PC-3 (cell line): ENCODE measurements at regions of chr7 and their contacts with region 1.

Region 1: GRCh38 chr7:133539016-133539415 is 286.1 kb downstream of the EXOC4 start:
- DNase-seq: no peak
- ATAC-seq: no peak
- H3K4me3 ChIP-seq: no peak overlapping the region
- H3K27ac ChIP-seq: no peak overlapping the region
- H3K4me1 ChIP-seq: peaks cover 9% of the 10 kb centered on the region
- H3K27me3 ChIP-seq: no peaks in the 10 kb centered on the region
- CTCF ChIP-seq: no peak

Region 2: DNA sequence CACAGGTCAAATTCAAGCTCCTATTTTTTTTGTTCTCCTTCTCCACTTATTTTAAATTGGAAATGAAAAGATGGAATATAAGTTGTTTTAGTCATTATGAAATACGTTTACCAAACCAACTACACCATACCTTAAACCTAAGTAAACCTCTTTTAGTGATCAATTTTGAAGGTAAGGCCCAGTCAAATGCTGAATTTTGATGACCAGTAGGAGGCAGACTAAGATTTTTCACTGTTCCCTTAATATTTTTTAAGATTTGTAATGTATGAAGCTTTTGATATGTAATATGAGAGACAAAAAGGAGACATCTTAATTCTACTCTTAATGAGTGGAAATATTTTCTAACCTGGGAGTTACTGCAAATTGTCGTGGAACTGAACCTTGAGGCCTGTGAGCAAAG is 25.5 kb after region 1 on chr7:
- CTCF ChIA-PET with region 1: no interaction called
- POLR2A ChIA-PET with region 1: interaction called, 13 read pairs
- intact Hi-C with region 1: no loop called
- DNase-seq: peak; percentile 9
- ATAC-seq: no peak
- H3K4me3 ChIP-seq: no peak overlapping the region
- H3K27ac ChIP-seq: no peak overlapping the region
- H3K4me1 ChIP-seq: peaks cover 8% of the 10 kb centered on the region; the same call in 1 of the 2 replicates
- H3K27me3 ChIP-seq: no peaks in the 10 kb centered on the region
- CTCF ChIP-seq: peak; percentile 63

Region 3: DNA sequence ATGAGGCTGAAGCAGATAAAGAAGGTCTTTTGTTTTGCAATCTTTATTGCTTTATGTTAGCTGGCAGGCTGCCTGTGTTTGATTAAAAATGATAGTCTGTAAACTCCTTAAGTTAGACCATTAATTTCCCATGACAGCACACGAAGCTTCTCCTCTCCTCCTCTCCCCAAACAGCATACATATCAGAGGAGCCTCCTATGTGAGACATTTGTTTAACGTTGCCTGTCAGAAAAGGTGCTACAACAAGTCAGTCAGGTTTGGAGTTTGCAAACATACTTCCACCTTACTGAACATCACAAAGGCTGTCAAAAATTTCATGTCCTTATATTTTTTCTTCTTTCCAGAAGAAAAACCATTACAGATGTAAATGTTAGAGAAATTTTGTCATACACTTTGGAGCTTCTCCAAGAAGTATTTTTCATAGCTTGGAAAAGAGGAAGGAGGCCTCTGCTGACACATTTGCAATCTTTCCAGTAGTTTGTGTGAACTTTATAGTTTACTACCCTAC is 106.9 kb after region 1 on chr7:
- CTCF ChIA-PET with region 1: no interaction called
- POLR2A ChIA-PET with region 1: no interaction called
- intact Hi-C with region 1: no loop called
- DNase-seq: peak; percentile 17
- ATAC-seq: peak; percentile 53
- H3K4me3 ChIP-seq: no peak overlapping the region
- H3K27ac ChIP-seq: no peak overlapping the region
- H3K4me1 ChIP-seq: peaks cover 3% of the 10 kb centered on the region; the same call in 1 of the 2 replicates
- H3K27me3 ChIP-seq: no peaks in the 10 kb centered on the region
- CTCF ChIP-seq: no peak

Region 4: GRCh38 chr7:134108813-134109212 is 569.8 kb after region 1 on chr7:
- CTCF ChIA-PET with region 1: no interaction called
- POLR2A ChIA-PET with region 1: no interaction called
- intact Hi-C with region 1: no loop called
- DNase-seq: no peak
- ATAC-seq: no peak
- H3K4me3 ChIP-seq: no peak overlapping the region
- H3K27ac ChIP-seq: no peak overlapping the region
- H3K4me1 ChIP-seq: no peaks in the 10 kb centered on the region
- H3K27me3 ChIP-seq: no peaks in the 10 kb centered on the region
- CTCF ChIP-seq: no peak